MCF 10A (cell line): ENCODE measurements at regions of chr7 and their contacts with region 1.

Region 1: DNA sequence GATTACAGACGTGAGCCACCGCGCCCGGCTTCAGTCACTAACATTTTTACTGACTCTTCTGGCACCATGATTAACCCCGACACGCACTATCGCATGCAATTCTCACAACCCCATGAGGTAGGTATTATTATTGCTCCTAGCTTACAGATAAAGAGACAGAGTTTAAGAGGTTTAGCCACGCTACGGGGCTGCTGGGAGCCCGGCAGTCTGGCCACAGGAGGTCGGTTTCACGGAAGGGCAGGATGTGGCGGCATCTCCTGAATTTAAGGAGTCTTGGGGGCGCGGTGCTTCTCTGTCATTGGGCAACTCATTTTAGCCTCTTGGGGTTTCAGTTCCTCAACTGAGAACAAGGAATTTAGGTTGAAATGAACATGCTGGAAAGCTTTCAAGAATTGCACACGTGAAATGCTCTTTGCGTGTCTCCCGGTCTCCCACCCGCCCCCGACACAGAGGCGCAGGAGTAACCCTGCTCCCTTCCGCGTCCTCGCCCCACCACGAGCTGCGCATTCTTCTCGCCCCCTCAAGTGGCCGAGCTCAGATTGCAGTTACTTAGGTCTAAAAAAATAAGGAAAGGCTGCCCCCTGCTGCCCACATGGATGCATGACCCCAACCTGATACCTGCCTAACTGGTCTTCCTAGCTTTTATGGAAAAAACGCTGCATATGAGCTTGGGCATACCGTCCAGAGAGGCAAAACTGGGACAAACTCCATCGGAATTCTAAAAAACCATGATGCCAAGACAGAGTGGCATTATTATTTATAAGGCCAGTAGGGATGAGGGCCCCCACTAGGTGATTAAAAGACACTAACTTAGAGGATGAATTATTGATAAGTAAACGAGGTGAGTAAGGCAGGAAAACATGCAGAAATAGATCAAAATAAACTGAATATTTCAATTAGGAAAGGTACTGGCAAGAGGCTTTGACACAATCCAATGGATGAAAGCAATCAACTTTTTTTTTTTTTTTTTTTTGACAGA is 12.4 kb downstream of the PRSS2 start:
- DNase-seq: peak; percentile 88
- H3K4me3 Mint-ChIP-seq: peak overlapping the region; percentile 64
- H3K27ac Mint-ChIP-seq: no peak overlapping the region
- H3K4me1 Mint-ChIP-seq: no peaks in the 10 kb centered on the region
- H3K27me3 Mint-ChIP-seq: peaks cover 6% of the 10 kb centered on the region
- CTCF ChIP-seq: peak; percentile 94

Region 2: DNA sequence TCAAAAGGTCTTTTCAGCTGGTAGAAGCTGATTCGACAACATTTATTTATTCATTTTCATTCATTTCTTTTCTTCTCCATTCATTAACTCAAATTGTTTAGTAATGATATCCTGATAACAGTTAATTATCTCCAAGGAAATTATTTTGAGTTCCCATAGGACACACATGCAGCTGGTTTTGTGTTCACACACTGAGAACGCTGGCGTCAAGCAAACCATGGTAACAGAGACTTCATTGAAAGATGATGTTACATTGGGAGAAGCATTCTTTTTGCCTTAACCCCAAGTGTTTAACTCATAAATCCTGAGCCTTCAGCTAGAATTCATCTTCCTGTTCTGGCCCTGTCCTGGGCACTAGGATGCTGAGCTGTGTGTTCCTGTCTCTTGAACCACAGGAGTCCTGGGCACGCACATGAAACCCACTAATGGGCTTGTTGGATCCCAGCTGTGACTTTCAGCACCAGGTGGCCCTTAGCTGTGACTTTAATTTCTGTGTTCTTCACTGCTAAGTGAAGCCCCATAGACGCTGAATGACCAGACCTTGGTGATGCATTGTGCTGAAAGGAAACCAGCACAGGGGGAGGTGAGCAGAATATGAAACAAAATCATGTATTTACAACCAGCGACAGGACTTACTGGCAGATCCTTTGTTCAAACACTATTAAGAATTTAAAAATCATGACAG is 403.9 kb before region 1 on chr7:
- CTCF ChIA-PET with region 1: no interaction called
- POLR2A ChIA-PET with region 1: no interaction called
- intact Hi-C with region 1: no loop called
- DNase-seq: no peak
- H3K4me3 Mint-ChIP-seq: no peak overlapping the region
- H3K27ac Mint-ChIP-seq: no peak overlapping the region
- H3K4me1 Mint-ChIP-seq: peaks cover 17% of the 10 kb centered on the region
- H3K27me3 Mint-ChIP-seq: no peaks in the 10 kb centered on the region
- CTCF ChIP-seq: no peak

Region 3: GRCh38 chr7:142516038-142516501 is 267.1 kb before region 1 on chr7:
- CTCF ChIA-PET with region 1: interaction called, 29 read pairs
- POLR2A ChIA-PET with region 1: no interaction called
- intact Hi-C with region 1: loop called (anchors 1 kb)
- DNase-seq: peak; percentile 81
- H3K4me3 Mint-ChIP-seq: no peak overlapping the region
- H3K27ac Mint-ChIP-seq: no peak overlapping the region
- H3K4me1 Mint-ChIP-seq: peaks cover 20% of the 10 kb centered on the region
- H3K27me3 Mint-ChIP-seq: no peaks in the 10 kb centered on the region
- CTCF ChIP-seq: peak; percentile 80

Region 4: DNA sequence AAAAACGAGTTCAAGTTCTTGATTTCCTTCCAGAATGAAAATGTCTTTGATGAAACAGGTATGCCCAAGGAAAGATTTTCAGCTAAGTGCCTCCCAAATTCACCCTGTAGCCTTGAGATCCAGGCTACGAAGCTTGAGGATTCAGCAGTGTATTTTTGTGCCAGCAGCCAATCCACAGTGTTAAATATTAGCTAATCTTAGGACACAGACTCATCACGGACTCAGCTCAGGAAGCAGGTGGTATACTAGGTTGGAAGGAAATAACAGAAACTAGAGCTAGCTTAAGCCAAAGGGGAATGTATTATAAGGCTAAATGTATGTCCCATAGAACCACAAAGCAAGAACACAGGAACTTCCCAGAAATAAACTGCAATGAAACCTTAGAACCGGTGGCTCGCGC is 184.9 kb before region 1 on chr7:
- CTCF ChIA-PET with region 1: interaction called, 47 read pairs
- POLR2A ChIA-PET with region 1: interaction called, 3 read pairs
- intact Hi-C with region 1: no loop called
- DNase-seq: no peak
- H3K4me3 Mint-ChIP-seq: no peak overlapping the region
- H3K27ac Mint-ChIP-seq: no peak overlapping the region
- H3K4me1 Mint-ChIP-seq: no peaks in the 10 kb centered on the region
- H3K27me3 Mint-ChIP-seq: no peaks in the 10 kb centered on the region
- CTCF ChIP-seq: no peak

Region 5: GRCh38 chr7:142642316-142642715 is 140.9 kb before region 1 on chr7:
- CTCF ChIA-PET with region 1: interaction called, 150 read pairs
- POLR2A ChIA-PET with region 1: interaction called, 3 read pairs
- intact Hi-C with region 1: no loop called
- DNase-seq: no peak
- H3K4me3 Mint-ChIP-seq: no peak overlapping the region
- H3K27ac Mint-ChIP-seq: no peak overlapping the region
- H3K4me1 Mint-ChIP-seq: no peaks in the 10 kb centered on the region
- H3K27me3 Mint-ChIP-seq: peaks cover 100% of the 10 kb centered on the region
- CTCF ChIP-seq: no peak

Region 6: DNA sequence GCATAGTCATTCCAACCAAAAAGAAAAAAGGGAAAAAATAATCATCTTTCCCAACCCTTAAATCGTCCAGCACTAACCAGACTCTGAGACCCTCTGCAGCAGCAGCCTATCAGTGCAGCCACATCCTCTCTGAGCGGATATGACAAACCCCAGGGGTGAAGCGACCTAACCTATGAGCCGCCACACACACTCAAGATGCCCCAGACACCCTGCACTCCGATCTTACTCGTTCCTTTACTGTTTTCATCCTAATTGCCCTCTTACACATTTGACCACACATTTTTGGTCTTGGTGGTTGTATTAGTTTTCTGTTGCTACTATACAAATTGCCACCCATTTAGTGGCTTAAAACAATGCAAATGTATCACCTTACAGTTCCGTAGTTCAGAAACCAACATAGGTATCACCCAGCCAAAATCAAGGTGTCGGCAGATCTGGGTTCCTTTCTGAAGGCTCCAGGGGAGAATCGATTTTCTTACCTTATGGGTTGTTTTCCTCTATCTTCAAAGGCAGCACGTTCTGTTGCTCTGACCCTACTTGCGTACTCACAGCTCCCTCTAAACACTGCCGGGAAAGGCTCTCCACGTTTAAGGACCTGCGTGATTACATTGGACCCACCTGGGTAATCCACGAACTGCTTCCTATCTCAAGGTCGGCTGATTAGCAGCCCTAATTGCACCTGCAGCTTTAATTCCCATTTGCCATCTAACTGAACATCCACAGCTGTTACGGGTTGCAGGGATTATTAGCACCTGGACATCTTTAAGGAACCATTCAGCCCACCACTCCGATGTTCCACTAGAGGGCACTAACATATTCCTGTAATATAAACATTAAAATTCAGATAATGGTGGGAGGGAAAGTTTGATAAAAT is 71.2 kb before region 1 on chr7:
- CTCF ChIA-PET with region 1: interaction called, 110 read pairs
- POLR2A ChIA-PET with region 1: interaction called, 5 read pairs
- intact Hi-C with region 1: loop called (anchors 1 kb)
- DNase-seq: peak; percentile 40
- H3K4me3 Mint-ChIP-seq: no peak overlapping the region
- H3K27ac Mint-ChIP-seq: no peak overlapping the region
- H3K4me1 Mint-ChIP-seq: no peaks in the 10 kb centered on the region
- H3K27me3 Mint-ChIP-seq: peaks cover 76% of the 10 kb centered on the region
- CTCF ChIP-seq: peak; percentile 47

Region 7: DNA sequence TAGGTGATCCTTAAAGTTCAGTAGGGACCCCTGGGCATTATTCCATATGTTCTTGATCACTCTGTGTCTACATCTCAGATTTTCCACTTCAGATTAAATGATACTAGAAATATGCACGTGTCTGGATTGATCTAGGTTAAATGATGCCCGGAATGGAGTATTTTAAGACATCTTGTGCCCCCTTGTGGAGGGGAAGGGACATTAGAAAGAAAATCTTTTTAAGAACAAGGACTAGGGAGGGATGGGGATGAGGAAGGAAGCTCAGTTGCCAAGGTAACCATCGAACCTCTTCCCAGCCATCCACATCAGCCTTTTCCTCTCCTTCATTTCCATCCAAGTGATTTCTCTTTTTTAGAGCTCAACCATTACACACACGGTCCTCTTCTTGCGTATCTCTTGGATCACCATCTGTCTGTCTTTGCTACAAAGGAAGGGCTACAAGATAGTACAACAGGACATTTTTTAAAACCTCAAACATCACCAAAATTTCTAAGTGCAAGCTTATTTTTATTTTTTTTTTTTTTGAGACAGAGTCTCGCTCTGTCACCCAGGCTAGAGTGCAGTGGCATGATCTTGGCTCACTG is 28.0 kb after region 1 on chr7:
- CTCF ChIA-PET with region 1: interaction called, 32 read pairs
- POLR2A ChIA-PET with region 1: no interaction called
- intact Hi-C with region 1: loop called (anchors 2 kb)
- DNase-seq: peak; percentile 58
- H3K4me3 Mint-ChIP-seq: no peak overlapping the region
- H3K27ac Mint-ChIP-seq: no peak overlapping the region
- H3K4me1 Mint-ChIP-seq: no peaks in the 10 kb centered on the region
- H3K27me3 Mint-ChIP-seq: peaks cover 79% of the 10 kb centered on the region
- CTCF ChIP-seq: peak; percentile 63